ENCODE measurements at regions of chr9 and their contacts with region 1.

Region 1: GRCh38 chr9:114072184-114073140 is 5.6 kb downstream of the AMBP start:
- DNase-seq: no peak

Region 2: DNA sequence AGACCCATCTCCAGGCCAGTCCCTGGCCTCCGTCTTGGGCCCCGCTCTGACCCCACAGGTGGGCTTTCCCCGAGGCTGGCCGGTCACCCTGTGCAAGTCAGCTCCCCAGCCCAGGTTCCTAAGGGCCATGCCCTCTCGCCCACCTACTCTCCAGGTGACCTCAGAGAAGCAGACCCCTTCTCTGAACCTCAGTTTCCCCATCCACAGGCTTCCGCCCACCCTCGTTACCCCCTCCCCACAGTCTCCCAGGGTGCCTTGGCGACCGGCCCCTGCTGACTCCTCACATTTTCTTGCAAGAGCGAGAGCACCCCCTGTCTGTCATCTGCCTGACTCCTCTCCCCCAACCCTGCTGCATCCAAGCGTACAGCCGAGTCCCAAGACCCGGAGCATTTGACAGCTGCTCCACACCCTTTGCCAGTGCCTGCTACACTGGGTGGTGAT is 199.2 kb after region 1 on chr9:
- CTCF ChIA-PET with region 1: interaction called, 10 read pairs
- POLR2A ChIA-PET with region 1: no interaction called
- DNase-seq: peak; percentile 48

Measured in HEK293T (cell line).